ENCODE measurements at regions of chr16 and their contacts with region 1.

Region 1: DNA sequence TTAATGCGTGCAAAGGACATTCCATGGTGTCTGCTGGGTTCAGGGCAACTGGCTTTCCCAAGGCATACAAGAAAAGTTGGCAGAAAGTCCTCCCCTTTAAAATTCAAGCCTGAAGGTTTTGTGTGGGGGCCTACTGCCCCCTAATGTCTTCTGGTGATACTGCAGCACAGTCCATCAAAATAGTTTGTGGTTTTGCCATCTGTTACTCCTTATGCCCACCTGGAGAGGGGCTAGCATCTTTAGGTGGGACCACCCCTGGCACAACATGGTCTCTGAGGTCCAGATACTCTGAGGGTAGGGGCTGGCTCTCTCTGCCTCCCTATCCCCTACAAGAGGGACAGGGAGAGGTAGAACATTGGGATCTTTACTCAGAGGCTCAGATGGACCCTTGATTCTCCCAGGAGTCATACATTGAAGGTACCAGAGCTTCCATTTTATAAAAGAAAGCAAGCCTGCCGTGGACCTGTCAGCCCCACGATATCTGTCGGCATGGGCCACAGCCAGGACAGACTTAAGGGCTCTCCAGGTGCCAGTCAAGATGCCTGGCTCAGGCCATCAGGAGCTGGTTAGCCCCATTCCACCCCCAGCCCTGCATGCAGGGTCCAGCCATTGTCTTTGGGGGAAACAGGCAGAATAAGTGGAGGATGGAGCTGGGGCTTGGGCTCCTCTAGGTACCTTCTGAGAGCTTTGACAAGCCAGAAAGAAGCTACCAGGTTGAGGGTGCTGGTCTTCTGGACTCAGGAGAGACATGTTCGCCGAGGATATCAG is 6.3 kb downstream of the ESRP2 start:
- DNase-seq: peak; percentile 62
- H3K4me3 Mint-ChIP-seq: no peak overlapping the region
- H3K27ac Mint-ChIP-seq: peak overlapping the region; percentile 43
- H3K4me1 Mint-ChIP-seq: peaks cover 37% of the 10 kb centered on the region
- H3K27me3 Mint-ChIP-seq: no peaks in the 10 kb centered on the region

Region 2: DNA sequence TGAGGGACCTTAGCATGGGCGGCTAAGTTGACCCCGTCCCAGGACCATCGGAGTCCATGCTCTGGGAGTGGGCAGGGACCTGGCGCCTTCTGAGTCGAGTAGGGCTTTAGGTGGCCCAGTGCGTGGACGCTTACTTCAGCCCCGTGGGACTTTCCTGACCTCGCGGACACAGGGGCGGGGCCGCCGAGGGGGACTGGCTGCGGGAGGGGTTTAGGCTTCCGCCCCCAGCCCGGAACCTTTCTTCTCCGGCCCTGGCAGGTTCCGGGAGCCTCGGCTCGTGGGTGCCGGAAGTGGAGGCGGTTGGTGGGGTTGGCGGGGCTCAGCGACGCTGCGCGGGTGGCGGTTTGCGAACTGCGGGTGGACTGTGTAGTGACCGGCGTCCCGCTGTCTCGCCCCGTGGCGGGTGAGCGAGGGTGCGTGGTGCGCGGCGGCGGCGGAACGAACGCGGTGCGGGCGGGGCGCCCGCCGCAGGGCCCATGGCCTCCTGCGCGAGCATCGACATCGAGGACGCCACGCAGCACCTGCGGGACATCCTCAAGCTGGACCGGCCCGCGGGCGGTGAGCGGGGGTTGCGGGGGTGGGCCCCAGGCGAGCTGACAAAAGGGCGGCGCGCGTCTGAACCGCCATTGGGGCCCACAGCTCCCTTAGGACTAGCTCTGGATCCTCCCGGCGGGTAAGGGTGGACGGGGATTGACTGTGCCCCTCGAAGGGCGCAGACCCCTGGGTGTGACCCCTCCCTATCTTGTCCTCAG is 356.7 kb before region 1 on chr16 and contains the start of gene EDC4:
- CTCF ChIA-PET with region 1: no interaction called
- POLR2A ChIA-PET with region 1: no interaction called
- intact Hi-C with region 1: no loop called
- DNase-seq: peak; percentile 93
- H3K4me3 Mint-ChIP-seq: peak within 1 kb of the TSS; percentile 95
- H3K27ac Mint-ChIP-seq: peak within 1 kb of the TSS; percentile 88
- H3K4me1 Mint-ChIP-seq: peaks cover 28% of the 10 kb centered on the region
- H3K27me3 Mint-ChIP-seq: no peaks in the 10 kb centered on the region
- total RNA-seq, gene EDC4: 88.6 to 94.2 TPM

Region 3: DNA sequence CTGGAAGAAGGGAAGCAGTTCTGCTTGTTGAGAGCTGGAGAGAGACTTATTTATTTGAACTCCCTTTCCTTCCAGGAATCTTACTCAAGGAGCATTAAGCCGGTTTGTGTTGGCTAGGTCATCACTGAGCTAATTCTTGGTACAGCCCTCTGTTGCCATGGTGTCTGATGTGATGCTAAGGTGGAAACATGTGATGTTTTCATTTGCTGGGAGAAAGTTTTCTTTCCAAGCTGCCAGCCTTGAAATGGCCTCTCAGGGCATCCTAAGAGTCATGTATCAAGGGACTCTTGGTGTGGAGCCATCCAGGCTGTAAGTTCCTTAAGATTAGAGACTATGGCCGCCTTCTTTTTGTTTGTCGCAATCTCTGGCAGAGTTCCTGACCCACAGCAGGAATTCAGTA is 332.4 kb before region 1 on chr16:
- CTCF ChIA-PET with region 1: no interaction called
- POLR2A ChIA-PET with region 1: no interaction called
- intact Hi-C with region 1: no loop called
- DNase-seq: no peak
- H3K4me3 Mint-ChIP-seq: no peak overlapping the region
- H3K27ac Mint-ChIP-seq: no peak overlapping the region
- H3K4me1 Mint-ChIP-seq: peaks cover 29% of the 10 kb centered on the region
- H3K27me3 Mint-ChIP-seq: no peaks in the 10 kb centered on the region

Region 4: GRCh38 chr16:67993189-67994039 is 236.2 kb before region 1 on chr16:
- CTCF ChIA-PET with region 1: interaction called, 4 read pairs
- POLR2A ChIA-PET with region 1: interaction called, 3 read pairs
- intact Hi-C with region 1: loop called (anchors 1 kb)
- DNase-seq: peak; percentile 90
- H3K4me3 Mint-ChIP-seq: peak overlapping the region; percentile 73
- H3K27ac Mint-ChIP-seq: peak overlapping the region; percentile 94
- H3K4me1 Mint-ChIP-seq: peaks cover 37% of the 10 kb centered on the region
- H3K27me3 Mint-ChIP-seq: no peaks in the 10 kb centered on the region

Region 5: GRCh38 chr16:68005786-68006286 is 223.8 kb before region 1 on chr16:
- CTCF ChIA-PET with region 1: no interaction called
- POLR2A ChIA-PET with region 1: no interaction called
- intact Hi-C with region 1: no loop called
- DNase-seq: peak; percentile 55
- H3K4me3 Mint-ChIP-seq: no peak overlapping the region
- H3K27ac Mint-ChIP-seq: peak overlapping the region; percentile 78
- H3K4me1 Mint-ChIP-seq: peaks cover 29% of the 10 kb centered on the region
- H3K27me3 Mint-ChIP-seq: no peaks in the 10 kb centered on the region

Region 6: DNA sequence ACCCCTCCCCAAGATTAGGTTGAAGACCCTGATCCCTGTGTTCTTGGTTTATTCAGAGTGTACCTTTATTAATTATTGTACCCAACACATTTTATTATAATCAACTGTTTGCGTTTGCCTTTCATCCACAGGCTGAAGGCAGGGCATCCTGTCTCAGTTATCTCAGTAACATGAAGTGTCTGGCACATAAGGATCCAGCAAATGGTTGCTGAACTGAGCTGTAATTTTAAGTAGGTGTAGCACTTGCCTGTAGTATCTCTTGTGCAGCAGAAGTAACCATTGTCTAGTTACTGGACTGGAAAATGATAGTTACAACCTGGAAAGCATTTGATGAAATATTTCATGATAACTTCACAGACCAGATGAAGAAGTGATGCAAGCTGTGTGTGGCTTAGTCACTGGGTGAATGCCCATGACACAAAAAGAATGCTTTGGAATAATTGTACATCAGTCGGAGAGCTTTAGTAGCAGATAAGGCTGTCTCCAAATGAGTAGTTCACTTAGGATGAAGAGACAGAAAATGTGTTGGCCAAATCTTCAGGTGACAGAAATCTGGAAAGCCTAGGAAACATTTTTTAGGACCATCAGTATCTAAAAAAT is 50.3 kb before region 1 on chr16:
- CTCF ChIA-PET with region 1: interaction called, 8 read pairs
- POLR2A ChIA-PET with region 1: no interaction called
- intact Hi-C with region 1: loop called (anchors 5 kb)
- DNase-seq: no peak
- H3K4me3 Mint-ChIP-seq: no peak overlapping the region
- H3K27ac Mint-ChIP-seq: peak overlapping the region; percentile 47
- H3K4me1 Mint-ChIP-seq: peaks cover 23% of the 10 kb centered on the region
- H3K27me3 Mint-ChIP-seq: no peaks in the 10 kb centered on the region

Region 7: GRCh38 chr16:68214726-68215125 is 14.9 kb before region 1 on chr16:
- CTCF ChIA-PET with region 1: interaction called, 5 read pairs
- POLR2A ChIA-PET with region 1: no interaction called
- intact Hi-C with region 1: loop called (anchors 2 kb)
- DNase-seq: no peak
- H3K4me3 Mint-ChIP-seq: no peak overlapping the region
- H3K27ac Mint-ChIP-seq: no peak overlapping the region
- H3K4me1 Mint-ChIP-seq: peaks cover 28% of the 10 kb centered on the region
- H3K27me3 Mint-ChIP-seq: no peaks in the 10 kb centered on the region

Region 8: DNA sequence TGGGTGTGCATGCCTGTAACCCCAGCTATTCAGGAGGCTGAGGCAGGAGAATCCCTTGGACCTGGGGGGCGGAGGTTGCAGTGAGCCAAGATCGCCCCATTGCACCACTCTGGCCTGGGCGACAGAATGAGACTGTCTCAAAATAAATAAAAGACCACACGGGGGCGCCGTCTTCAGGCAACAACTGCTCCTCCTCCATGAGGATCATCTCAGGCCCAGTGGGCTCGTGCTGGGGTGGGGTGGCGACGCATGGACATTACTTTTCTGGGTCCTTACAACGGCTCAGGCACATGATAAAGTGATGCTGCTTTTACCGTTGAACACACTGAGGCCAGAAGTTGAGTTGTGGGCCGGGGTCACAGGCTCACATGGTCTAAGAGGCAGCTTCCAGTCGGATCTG is 137.4 kb after region 1 on chr16:
- CTCF ChIA-PET with region 1: no interaction called
- POLR2A ChIA-PET with region 1: no interaction called
- intact Hi-C with region 1: no loop called
- DNase-seq: peak; percentile 57
- H3K4me3 Mint-ChIP-seq: no peak overlapping the region
- H3K27ac Mint-ChIP-seq: no peak overlapping the region
- H3K4me1 Mint-ChIP-seq: peaks cover 32% of the 10 kb centered on the region
- H3K27me3 Mint-ChIP-seq: peaks cover 10% of the 10 kb centered on the region